Gastrocnemius medialis (tissue), 4 donors: ENCODE measurements at regions of chr3 and their contacts with region 1.

Region 1: GRCh38 chr3:189621948-189622603 is 9.1 kb upstream of the TP63 start:
- DNase-seq: peak; percentile 44 to 73
- ATAC-seq: peak; percentile 70 to 76
- H3K4me3 ChIP-seq: peak overlapping the region in 3 of 4 donors; percentile 5 to 29 (median 14)
- H3K27ac ChIP-seq: peak overlapping the region; percentile 70 to 81 (median 74)
- H3K4me1 ChIP-seq: peaks cover 33 to 37% of the 10 kb centered on the region in 2 donors
- H3K27me3 ChIP-seq: no peaks in the 10 kb centered on the region
- CTCF ChIP-seq: no peak
- POLR2A ChIP-seq: no peak

Region 2: DNA sequence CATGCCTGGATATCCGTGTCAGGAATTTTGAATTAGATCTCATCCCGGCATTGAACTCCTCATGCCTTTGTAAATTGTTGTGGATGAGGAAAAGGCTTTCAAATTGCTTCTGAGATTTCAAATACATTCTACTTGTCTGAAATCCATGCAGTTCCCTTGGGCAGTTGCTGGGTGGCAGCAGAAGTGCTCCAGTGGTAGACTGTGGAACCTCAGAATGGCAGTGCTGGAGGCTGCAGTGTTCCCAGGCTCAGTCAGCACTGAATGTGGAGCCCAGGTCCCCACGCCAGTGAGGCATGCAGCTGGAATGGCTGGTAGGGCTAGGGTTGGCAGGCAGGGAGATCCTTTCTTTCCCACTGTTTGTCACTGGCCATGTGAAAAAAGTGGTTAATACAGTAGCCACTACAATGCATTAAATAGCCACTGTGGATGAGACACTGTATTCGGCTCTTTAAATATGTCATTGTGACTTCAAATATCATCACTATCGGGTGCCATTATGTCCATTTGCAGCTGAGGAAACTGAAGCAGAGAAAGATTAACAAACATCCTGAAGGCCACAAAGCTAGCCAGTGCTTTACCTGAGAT is 351.7 kb before region 1 on chr3:
- in situ Hi-C with region 1: no loop called
- intact Hi-C with region 1: loop called (anchors 5 kb)
- DNase-seq: peak; percentile 34 to 70
- ATAC-seq: peak; percentile 90 to 97
- H3K4me3 ChIP-seq: no peak overlapping the region
- H3K27ac ChIP-seq: no peak overlapping the region
- H3K4me1 ChIP-seq: peaks cover 10 to 11% of the 10 kb centered on the region in 2 donors
- H3K27me3 ChIP-seq: no peaks in the 10 kb centered on the region
- CTCF ChIP-seq: peak; percentile 49 to 70 (median 59)
- POLR2A ChIP-seq: no peak

Region 3: DNA sequence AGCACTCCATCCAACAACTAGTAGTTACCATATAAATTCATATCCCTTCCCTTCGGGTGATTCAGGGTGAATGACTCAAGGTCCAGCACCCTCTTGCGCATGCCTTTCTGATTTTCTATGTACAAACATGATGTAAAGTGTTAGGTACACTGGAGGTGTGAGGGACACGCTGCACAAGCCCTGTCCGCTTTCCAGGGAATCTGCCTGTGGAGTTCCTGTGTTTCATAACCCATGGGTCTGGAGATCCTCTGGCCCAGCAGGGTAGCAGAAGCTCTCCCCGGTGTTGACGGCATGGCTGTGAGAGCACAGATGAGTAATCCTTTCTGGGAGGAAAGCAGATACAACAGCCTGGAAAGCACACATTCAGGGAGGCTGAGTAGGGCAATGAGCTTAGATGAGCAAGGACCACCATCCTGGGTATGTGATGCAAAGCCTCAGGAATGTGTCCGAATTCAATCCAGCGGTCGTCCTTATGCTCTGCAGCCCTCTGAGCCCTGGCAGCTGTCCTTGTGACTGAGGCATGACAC is 133.8 kb before region 1 on chr3:
- in situ Hi-C with region 1: no loop called
- intact Hi-C with region 1: loop called (anchors 5 kb)
- DNase-seq: peak; percentile 18 to 58
- ATAC-seq: peak; percentile 76 to 90
- H3K4me3 ChIP-seq: no peak overlapping the region
- H3K27ac ChIP-seq: peak overlapping the region in 3 of 4 donors; percentile 48 to 66 (median 52)
- H3K4me1 ChIP-seq: no peaks in the 10 kb centered on the region
- H3K27me3 ChIP-seq: no peaks in the 10 kb centered on the region
- CTCF ChIP-seq: no peak
- POLR2A ChIP-seq: no peak